ENCODE measurements at regions of chr6 and their contacts with region 1.

Region 1: DNA sequence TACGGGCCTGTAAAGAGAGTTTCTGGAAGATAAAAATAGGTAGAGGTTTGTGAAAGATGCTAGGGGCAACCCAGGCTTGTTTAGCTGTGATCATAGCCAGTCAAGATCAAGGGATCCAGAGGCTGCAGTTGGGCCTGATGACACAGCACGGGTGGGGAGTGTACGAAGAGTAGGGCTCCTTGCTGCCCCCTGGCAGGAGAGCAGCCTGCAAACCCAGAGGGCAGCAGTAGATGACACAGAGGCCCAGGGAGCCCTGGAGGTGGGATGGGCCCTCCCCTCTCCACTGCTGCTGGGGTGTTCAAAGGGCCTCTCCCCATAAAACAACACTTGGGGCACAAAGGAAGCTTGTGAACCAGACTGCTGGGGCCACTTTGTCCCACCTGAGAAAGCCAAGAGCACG is 47.2 kb downstream of the VEGFA start:
- DNase-seq: peak; percentile 66 to 69
- H3K4me3 ChIP-seq: no peak overlapping the region
- H3K4me3 Mint-ChIP-seq: no peak overlapping the region
- H3K27ac Mint-ChIP-seq: peak overlapping the region; percentile 56
- H3K4me1 ChIP-seq: peaks cover 57% of the 10 kb centered on the region
- H3K4me1 Mint-ChIP-seq: peaks cover 55% of the 10 kb centered on the region
- H3K27me3 ChIP-seq: no peaks in the 10 kb centered on the region
- H3K27me3 Mint-ChIP-seq: no peaks in the 10 kb centered on the region
- CTCF ChIP-seq: peak; percentile 19 to 80

Region 2: GRCh38 chr6:43774776-43775534 is 42.2 kb before region 1 on chr6:
- CTCF ChIA-PET with region 1: interaction called, 9 read pairs
- POLR2A ChIA-PET with region 1: interaction called, 10 read pairs
- intact Hi-C with region 1: loop called (anchors 1 kb)
- DNase-seq: peak; percentile 69 to 77
- H3K4me3 ChIP-seq: no peak overlapping the region
- H3K4me3 Mint-ChIP-seq: peak overlapping the region; percentile 96
- H3K27ac Mint-ChIP-seq: peak overlapping the region; percentile 97
- H3K4me1 ChIP-seq: peaks cover 27% of the 10 kb centered on the region
- H3K4me1 Mint-ChIP-seq: peaks cover 7% of the 10 kb centered on the region
- H3K27me3 ChIP-seq: no peaks in the 10 kb centered on the region
- H3K27me3 Mint-ChIP-seq: no peaks in the 10 kb centered on the region
- CTCF ChIP-seq: peak; percentile 91 to 95

Region 3: GRCh38 chr6:44246663-44247337 is 429.6 kb after region 1 on chr6 and contains the start of gene HSP90AB1:
- CTCF ChIA-PET with region 1: no interaction called
- POLR2A ChIA-PET with region 1: no interaction called
- intact Hi-C with region 1: loop called (anchors 5 kb)
- DNase-seq: peak; percentile 95 to 98
- H3K4me3 ChIP-seq: peak within 1 kb of the TSS; percentile 97
- H3K4me3 Mint-ChIP-seq: peak within 1 kb of the TSS; percentile 97
- H3K27ac Mint-ChIP-seq: peak within 1 kb of the TSS; percentile 99
- H3K4me1 ChIP-seq: peaks cover 15% of the 10 kb centered on the region
- H3K4me1 Mint-ChIP-seq: peaks cover 13% of the 10 kb centered on the region
- H3K27me3 ChIP-seq: no peaks in the 10 kb centered on the region
- H3K27me3 Mint-ChIP-seq: no peaks in the 10 kb centered on the region
- CTCF ChIP-seq: no peak
- total RNA-seq, gene HSP90AB1: 967 and 1,046 TPM in 2 replicates

Measured in Caco-2 (cell line).